K562 (cell line): ENCODE measurements at regions of chr6 and their contacts with region 1.

Region 1: GRCh38 chr6:45930420-45931040 is 85.1 kb downstream of the CLIC5 start:
- DNase-seq: peak; percentile 73 to 82 (median 79)
- ATAC-seq: peak; percentile 94
- H3K4me3 ChIP-seq: no peak overlapping the region
- H3K27ac ChIP-seq: no peak overlapping the region
- H3K4me1 ChIP-seq: peaks cover 0 to 2% of the 10 kb centered on the region in 2 experiments; a peak in 1 of 5 replicates
- H3K27me3 ChIP-seq: peaks cover 0 to 13% of the 10 kb centered on the region in 2 experiments; a peak in 2 of 5 replicates
- CTCF ChIP-seq: peak; percentile 83 to 97 (median 94)
- EP300 ChIP-seq: no peak
- POLR2A ChIP-seq: no peak
- RAD21 ChIP-seq: peak; percentile 55 to 78

Region 2: DNA sequence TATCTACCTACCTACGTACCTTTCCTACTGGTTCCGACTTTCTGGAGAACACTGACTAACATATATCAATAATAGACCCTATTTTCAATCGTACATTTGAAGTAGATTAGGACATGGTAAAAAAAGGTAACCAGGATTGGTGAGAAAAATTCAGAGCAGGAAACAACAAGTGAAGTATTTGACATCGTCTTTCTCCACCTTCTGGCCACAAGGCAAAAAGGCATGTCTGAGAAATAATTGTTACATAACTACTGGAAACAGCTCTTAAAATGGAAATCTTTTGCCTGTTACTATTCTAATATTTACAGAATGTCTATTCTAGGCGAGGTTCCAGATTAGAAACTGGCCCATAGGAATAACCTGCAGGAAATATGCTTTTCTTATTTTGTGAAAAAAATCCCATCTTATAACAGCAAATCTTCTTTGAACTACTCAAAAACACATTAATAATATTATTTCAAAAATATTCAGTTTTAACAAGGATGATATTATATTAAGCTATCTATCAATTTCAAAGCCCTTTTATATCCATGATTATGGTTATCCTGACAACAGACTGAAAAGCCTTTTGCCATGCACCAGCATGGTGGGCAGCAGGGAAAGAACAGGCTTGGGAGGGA is 479.9 kb after region 1 on chr6:
- CTCF ChIA-PET with region 1: interaction called, 12 read pairs
- POLR2A ChIA-PET with region 1: no interaction called
- in situ Hi-C with region 1: loop called (anchors 10 kb)
- intact Hi-C with region 1: loop called (anchors 2 kb)
- DNase-seq: peak; percentile 35 to 45 (median 40)
- ATAC-seq: peak; percentile 54; the same call in 1 of the 3 replicates
- H3K4me3 ChIP-seq: no peak overlapping the region
- H3K27ac ChIP-seq: no peak overlapping the region
- H3K4me1 ChIP-seq: no peaks in the 10 kb centered on the region
- H3K27me3 ChIP-seq: no peaks in the 10 kb centered on the region
- CTCF ChIP-seq: peak; percentile 59 to 89 (median 73); a peak in 5 of 6 replicates
- EP300 ChIP-seq: no peak
- POLR2A ChIP-seq: no peak
- RAD21 ChIP-seq: peak; percentile 92 to 93

Region 3: DNA sequence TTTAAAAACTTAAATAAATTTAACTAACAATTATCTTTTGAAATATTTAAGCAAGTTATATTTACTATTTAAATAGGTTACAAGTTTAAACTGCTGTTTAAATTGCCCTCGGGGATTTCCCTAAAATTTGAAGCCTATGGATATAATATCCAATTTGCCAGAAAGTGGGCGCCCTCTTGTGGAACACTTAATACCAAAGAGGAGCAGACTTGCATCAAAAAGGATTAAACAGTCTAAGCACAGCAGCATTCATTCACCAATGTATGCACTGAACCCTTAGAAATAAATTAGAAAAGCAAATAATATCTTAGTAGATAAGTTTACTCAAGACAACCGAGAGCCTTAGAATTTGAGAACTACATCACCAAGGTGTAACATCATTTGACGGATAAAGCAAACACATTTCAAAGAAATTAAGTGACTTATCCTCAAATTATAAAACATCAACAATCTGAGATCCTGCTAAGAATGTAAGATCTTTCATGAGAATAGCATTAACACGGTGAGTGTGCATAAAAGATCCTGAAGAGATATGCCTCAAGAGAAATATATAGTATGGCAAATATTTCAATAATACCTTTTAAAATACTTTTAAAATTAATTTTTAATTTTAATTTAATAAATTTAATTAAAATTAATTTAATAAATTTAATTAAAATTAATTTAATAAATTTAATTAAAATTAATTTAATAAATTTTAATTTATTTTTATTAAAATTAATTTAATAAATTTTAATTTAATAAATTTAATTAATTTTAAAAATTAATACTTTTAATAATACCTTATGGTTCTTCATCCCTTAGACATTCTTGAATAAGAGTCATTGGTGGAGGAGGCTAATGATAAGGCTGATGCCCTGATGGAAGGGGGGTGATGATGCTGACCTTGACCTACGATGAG is 851.2 kb after region 1 on chr6:
- CTCF ChIA-PET with region 1: no interaction called
- POLR2A ChIA-PET with region 1: no interaction called
- in situ Hi-C with region 1: no loop called
- intact Hi-C with region 1: loop called (anchors 5 kb)
- DNase-seq: peak; percentile 36 to 69 (median 54)
- ATAC-seq: peak; percentile 82
- H3K4me3 ChIP-seq: no peak overlapping the region
- H3K27ac ChIP-seq: no peak overlapping the region
- H3K4me1 ChIP-seq: no peaks in the 10 kb centered on the region
- H3K27me3 ChIP-seq: no peaks in the 10 kb centered on the region
- CTCF ChIP-seq: peak; percentile 50 to 72 (median 57); a peak in 5 of 6 replicates
- EP300 ChIP-seq: no peak
- POLR2A ChIP-seq: no peak
- RAD21 ChIP-seq: peak; percentile 42 to 65; a peak in 3 of 4 replicates

Region 4: DNA sequence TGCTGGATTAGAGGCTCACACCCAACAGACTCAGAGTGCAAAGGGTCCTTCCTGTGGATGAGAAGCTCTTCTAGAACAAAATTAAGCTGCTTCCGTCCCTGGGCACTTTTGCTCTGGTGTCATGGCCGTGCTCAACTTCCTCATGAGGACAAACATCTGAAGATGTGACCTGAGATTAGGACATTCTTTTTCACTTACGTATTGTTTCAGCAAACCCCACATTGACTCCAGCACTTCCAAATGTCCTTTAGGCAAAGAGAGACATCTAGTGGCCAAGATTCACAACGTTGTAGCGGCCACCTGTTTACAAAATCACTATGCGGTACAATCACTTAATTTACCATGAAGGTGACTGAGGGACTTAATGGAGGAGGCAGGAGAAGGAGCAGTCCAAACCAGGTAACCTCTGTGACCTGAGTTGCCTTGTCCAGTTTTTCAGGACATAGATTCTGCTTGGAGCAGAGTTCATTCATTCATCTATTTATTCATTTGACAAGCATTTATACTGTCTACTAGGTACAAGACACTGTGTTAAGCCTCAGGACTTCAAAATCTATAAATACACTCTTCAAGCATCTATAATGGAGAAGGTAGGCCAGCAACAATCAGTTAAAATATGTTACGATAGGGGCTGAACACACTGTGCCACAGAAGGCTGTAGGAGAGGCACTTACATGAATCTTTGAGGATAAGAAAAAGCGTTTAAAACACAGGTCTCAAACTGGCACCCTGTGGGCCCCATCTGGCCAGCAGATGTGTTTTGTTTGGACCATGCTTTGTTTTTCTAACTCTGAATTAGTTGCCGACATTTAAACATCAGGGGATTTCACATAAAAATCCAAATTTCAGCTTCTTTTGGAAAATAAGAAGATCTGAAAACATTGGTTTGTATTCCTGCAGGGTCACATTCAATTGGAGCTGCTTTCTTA is 1117.2 kb after region 1 on chr6:
- CTCF ChIA-PET with region 1: no interaction called
- POLR2A ChIA-PET with region 1: no interaction called
- in situ Hi-C with region 1: no loop called
- intact Hi-C with region 1: loop called (anchors 5 kb)
- DNase-seq: peak; percentile 27 to 72 (median 39)
- ATAC-seq: peak; percentile 99
- H3K4me3 ChIP-seq: no peak overlapping the region
- H3K27ac ChIP-seq: no peak overlapping the region
- H3K4me1 ChIP-seq: no peaks in the 10 kb centered on the region
- H3K27me3 ChIP-seq: no peaks in the 10 kb centered on the region
- CTCF ChIP-seq: peak; percentile 74 to 90 (median 84)
- EP300 ChIP-seq: no peak
- POLR2A ChIP-seq: no peak
- RAD21 ChIP-seq: peak; percentile 70 to 85